ENCODE measurements at regions of chr1 and their contacts with region 1.

Region 1: GRCh38 chr1:205658943-205659581 is 21.2 kb downstream of the SLC45A3 start:
- DNase-seq: no peak
- ATAC-seq: peak; percentile 95
- H3K4me3 ChIP-seq: no peak overlapping the region
- H3K27ac ChIP-seq: no peak overlapping the region
- H3K4me1 ChIP-seq: no peaks in the 10 kb centered on the region; the same call in 1 of the 2 replicates
- H3K27me3 ChIP-seq: no peaks in the 10 kb centered on the region
- CTCF ChIP-seq: peak; percentile 93 to 95 (median 94)
- EP300 ChIP-seq: no peak
- POLR2A ChIP-seq: no peak
- RAD21 ChIP-seq: peak; percentile 96

Region 2: GRCh38 chr1:205313563-205314308 is 345.3 kb before region 1 on chr1:
- CTCF ChIA-PET with region 1: no interaction called
- POLR2A ChIA-PET with region 1: no interaction called
- RAD21 ChIA-PET with region 1: no interaction called
- SMC1A ChIA-PET with region 1: no interaction called
- in situ Hi-C with region 1: no loop called
- intact Hi-C with region 1: no loop called
- DNase-seq: peak; percentile 48
- ATAC-seq: peak; percentile 86
- H3K4me3 ChIP-seq: peak overlapping the region; percentile 35; the same call in 1 of the 2 replicates
- H3K27ac ChIP-seq: no peak overlapping the region; the same call in 1 of the 2 replicates
- H3K4me1 ChIP-seq: peaks cover 30% of the 10 kb centered on the region
- H3K27me3 ChIP-seq: no peaks in the 10 kb centered on the region; a peak in 1 of 4 replicates
- CTCF ChIP-seq: no peak
- EP300 ChIP-seq: peak; percentile 68; a peak in 2 of 4 replicates
- POLR2A ChIP-seq: no peak; the same call in 1 of the 2 replicates
- RAD21 ChIP-seq: no peak

Region 3: DNA sequence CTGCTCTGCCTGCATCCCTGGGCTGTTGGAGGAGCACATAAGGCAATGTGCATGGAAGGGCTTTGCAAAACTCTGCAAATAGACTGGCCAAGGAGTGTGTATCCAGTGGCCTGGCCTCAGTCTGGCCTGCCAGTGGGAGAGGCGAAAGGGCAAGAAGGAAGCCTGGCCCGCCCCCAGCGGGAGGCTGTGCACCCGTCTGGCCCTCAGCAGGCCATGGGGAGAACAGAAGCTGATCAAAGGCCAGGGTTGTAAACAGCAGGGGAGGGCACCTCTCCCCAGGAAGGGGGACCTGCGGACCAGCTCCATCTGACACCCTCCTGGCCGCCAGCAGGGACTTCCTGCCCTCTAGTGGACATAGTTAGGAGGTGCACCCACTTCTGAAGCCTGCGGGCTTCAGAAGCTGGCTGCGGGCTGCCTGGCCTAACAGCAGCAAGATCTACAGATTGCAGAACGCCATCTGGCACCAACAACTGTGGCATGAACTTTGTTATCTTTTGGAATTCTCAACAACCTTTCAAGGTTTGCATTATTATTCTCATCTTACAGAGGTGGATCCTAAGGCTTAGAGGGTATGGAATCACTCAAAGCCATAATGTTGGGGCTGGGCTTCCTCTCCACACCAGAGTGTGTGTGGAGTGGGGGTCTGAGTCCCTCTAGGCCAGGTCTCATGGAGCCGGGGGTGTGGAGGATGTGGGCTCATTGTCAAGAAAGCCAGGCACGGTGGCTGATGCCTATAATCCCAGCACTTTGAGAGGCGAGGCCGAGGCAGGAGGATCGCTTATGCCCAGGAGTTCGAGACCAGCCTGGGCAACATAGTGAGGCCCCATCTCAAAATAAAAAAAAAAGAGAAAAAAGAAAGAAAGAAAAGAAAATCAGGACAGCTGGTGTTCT is 173.5 kb before region 1 on chr1:
- CTCF ChIA-PET with region 1: interaction called, 105 read pairs
- POLR2A ChIA-PET with region 1: no interaction called
- RAD21 ChIA-PET with region 1: interaction called, 30 read pairs
- SMC1A ChIA-PET with region 1: interaction called, 46 read pairs
- in situ Hi-C with region 1: no loop called
- intact Hi-C with region 1: loop called (anchors 5 kb)
- DNase-seq: no peak
- ATAC-seq: peak; percentile 65
- H3K4me3 ChIP-seq: no peak overlapping the region
- H3K27ac ChIP-seq: no peak overlapping the region
- H3K4me1 ChIP-seq: peaks cover 14% of the 10 kb centered on the region
- H3K27me3 ChIP-seq: 0 out of 4 replicates have a peak, but pooled peaks cover 0 to 1% of the 10 kb centered on the region in 2 experiments
- CTCF ChIP-seq: peak; percentile 94 to 97 (median 96); a peak in 5 of 6 replicates
- EP300 ChIP-seq: no peak
- POLR2A ChIP-seq: no peak
- RAD21 ChIP-seq: peak; percentile 98

Region 4: DNA sequence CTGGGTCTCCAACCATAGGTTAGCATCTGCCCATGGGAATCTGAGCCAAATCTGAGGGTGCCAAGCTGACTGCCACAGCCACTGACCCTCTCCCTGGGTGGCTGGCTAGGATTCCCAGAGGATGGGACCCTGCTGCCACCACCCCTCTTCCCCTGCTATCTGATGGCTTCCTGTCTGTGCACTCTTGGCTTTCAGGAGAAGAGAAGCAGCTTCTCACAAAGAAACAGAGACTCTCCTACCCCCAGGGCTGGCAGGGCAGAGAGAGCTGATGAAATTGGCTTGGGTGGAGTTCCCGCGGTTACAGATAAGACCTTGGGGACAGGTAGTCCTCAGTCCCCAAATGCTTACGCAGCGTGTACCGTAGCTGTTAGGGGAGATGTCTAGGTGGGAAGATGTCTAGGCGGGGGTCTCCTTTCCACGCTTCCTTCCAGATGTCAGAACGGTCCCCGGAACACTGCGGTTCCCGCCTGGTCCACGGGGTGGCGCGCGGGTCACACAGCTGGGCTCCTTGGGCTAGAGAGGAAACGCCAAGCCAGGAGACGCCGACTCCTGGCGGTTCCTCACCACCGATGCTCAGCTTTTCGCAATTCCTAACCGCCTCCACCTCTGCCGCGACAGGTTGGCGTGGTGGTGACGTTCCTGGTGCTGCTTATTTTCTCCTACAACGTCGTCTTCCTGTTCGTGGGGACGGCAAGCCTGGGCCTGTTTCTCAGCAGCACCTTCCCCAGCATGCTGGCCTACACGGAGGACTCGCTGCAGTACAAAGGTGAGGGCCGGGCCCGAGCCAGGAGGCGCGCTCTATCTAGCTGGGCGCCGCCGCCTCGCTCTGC is 67.3 kb before region 1 on chr1:
- CTCF ChIA-PET with region 1: interaction called, 575 read pairs
- POLR2A ChIA-PET with region 1: interaction called, 37 read pairs
- RAD21 ChIA-PET with region 1: interaction called, 452 read pairs
- SMC1A ChIA-PET with region 1: interaction called, 415 read pairs
- in situ Hi-C with region 1: loop called (anchors 5 kb)
- intact Hi-C with region 1: loop called (anchors 1 kb)
- DNase-seq: peak; percentile 59
- ATAC-seq: peak; percentile 79
- H3K4me3 ChIP-seq: peak overlapping the region; percentile 66; the same call in 1 of the 2 replicates
- H3K27ac ChIP-seq: peak overlapping the region; percentile 71
- H3K4me1 ChIP-seq: peaks cover 36% of the 10 kb centered on the region
- H3K27me3 ChIP-seq: no peaks in the 10 kb centered on the region
- CTCF ChIP-seq: peak; percentile 98 to 99 (median 99); a peak in 5 of 6 replicates
- EP300 ChIP-seq: no peak
- POLR2A ChIP-seq: peak; percentile 69
- RAD21 ChIP-seq: peak; percentile 96

Region 5: GRCh38 chr1:205693421-205693991 is 34.4 kb after region 1 on chr1:
- CTCF ChIA-PET with region 1: interaction called, 22 read pairs
- POLR2A ChIA-PET with region 1: interaction called, 3 read pairs
- RAD21 ChIA-PET with region 1: interaction called, 7 read pairs
- SMC1A ChIA-PET with region 1: interaction called, 1,008 read pairs
- in situ Hi-C with region 1: no loop called
- intact Hi-C with region 1: no loop called
- DNase-seq: no peak
- ATAC-seq: peak; percentile 59; the same call in 2 of the 3 replicates
- H3K4me3 ChIP-seq: no peak overlapping the region
- H3K27ac ChIP-seq: no peak overlapping the region
- H3K4me1 ChIP-seq: 0 out of 2 replicates have a peak, but pooled peaks cover 3% of the 10 kb centered on the region
- H3K27me3 ChIP-seq: no peaks in the 10 kb centered on the region
- CTCF ChIP-seq: no peak
- EP300 ChIP-seq: no peak
- POLR2A ChIP-seq: no peak
- RAD21 ChIP-seq: no peak

Region 6: GRCh38 chr1:205750138-205751035 is 91.3 kb after region 1 on chr1 and contains the start of gene NUCKS1:
- CTCF ChIA-PET with region 1: interaction called, 26 read pairs
- POLR2A ChIA-PET with region 1: interaction called, 3 read pairs
- RAD21 ChIA-PET with region 1: interaction called, 21 read pairs
- SMC1A ChIA-PET with region 1: interaction called, 20 read pairs
- in situ Hi-C with region 1: no loop called
- intact Hi-C with region 1: no loop called
- DNase-seq: peak; percentile 93
- ATAC-seq: peak; percentile 87
- H3K4me3 ChIP-seq: peak within 1 kb of the TSS; percentile 90
- H3K27ac ChIP-seq: peak within 1 kb of the TSS; percentile 99
- H3K4me1 ChIP-seq: peaks cover 4% of the 10 kb centered on the region
- H3K27me3 ChIP-seq: no peaks in the 10 kb centered on the region
- CTCF ChIP-seq: no peak
- EP300 ChIP-seq: peak in 1 of 2 experiments; percentile 98; a peak in 2 of 4 replicates
- POLR2A ChIP-seq: no peak
- RAD21 ChIP-seq: no peak
- polyA plus RNA-seq, gene NUCKS1: 40.5 to 41.7 TPM

Region 7: GRCh38 chr1:205913451-205914155 is 254.5 kb after region 1 on chr1:
- CTCF ChIA-PET with region 1: interaction called, 61 read pairs
- POLR2A ChIA-PET with region 1: no interaction called
- RAD21 ChIA-PET with region 1: interaction called, 21 read pairs
- SMC1A ChIA-PET with region 1: interaction called, 31 read pairs
- in situ Hi-C with region 1: no loop called
- intact Hi-C with region 1: loop called (anchors 5 kb)
- DNase-seq: no peak
- ATAC-seq: no peak
- H3K4me3 ChIP-seq: no peak overlapping the region
- H3K27ac ChIP-seq: no peak overlapping the region
- H3K4me1 ChIP-seq: no peaks in the 10 kb centered on the region; the same call in 1 of the 2 replicates
- H3K27me3 ChIP-seq: peaks cover 0 to 2% of the 10 kb centered on the region in 2 experiments; a peak in 1 of 4 replicates
- CTCF ChIP-seq: no peak
- EP300 ChIP-seq: no peak
- POLR2A ChIP-seq: no peak
- RAD21 ChIP-seq: no peak

Measured in GM12878 (cell line).